Adrenal gland (tissue), 19 donors: ENCODE measurements at regions of chr15 and their contacts with region 1.

Region 1: DNA sequence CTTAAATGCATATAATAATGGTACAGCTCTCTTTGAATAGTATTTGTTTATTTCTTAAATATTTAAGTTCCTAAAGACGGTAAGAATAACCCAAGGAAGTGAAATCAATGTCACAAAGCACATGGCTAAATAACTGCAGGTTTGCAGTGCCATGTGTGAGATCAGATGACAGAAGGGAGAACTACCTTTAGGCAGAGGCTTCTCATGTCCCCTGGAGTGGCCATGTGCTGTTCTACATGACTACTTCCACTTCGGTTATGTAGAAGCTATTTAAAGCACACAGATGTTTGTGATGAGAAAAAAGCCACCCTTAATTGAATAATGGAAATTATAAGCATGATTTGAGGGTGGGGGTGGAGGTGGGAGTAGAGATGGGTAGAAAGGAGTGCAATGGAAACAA is 109.1 kb downstream of the UBE3A start:
- DNase-seq: no peak
- H3K4me3 ChIP-seq: no peak overlapping the region
- H3K27ac ChIP-seq: no peak overlapping the region
- H3K4me1 ChIP-seq: no peaks in the 10 kb centered on the region
- H3K27me3 ChIP-seq: no peaks in the 10 kb centered on the region
- CTCF ChIP-seq: no peak
- POLR2A ChIP-seq: no peak

Region 2: GRCh38 chr15:25408428-25408827 is 78.7 kb after region 1 on chr15:
- intact Hi-C with region 1: loop called in 1 of 2 experiments (anchors 10 kb)
- DNase-seq: peak in 1 of 7 donors; percentile 16
- H3K4me3 ChIP-seq: no peak overlapping the region
- H3K27ac ChIP-seq: peak overlapping the region in 1 of 5 donors; percentile 40
- H3K4me1 ChIP-seq: peaks cover 0 to 49% of the 10 kb centered on the region in 2 donors
- H3K27me3 ChIP-seq: no peaks in the 10 kb centered on the region
- CTCF ChIP-seq: no peak
- POLR2A ChIP-seq: no peak